ENCODE measurements at regions of chr9 and their contacts with region 1.

Region 1: GRCh38 chr9:35732122-35732799 is at the starts of genes CREB3 and TLN1:
- DNase-seq: peak; percentile 98
- ATAC-seq: peak; percentile 87
- H3K4me3 ChIP-seq: peak within 1 kb of the TSS; percentile 52 to 87 (median 82)
- H3K4me3 Mint-ChIP-seq: no peak within 1 kb of the TSS
- H3K27ac ChIP-seq: peak within 1 kb of the TSS; percentile 69 to 92
- H3K27ac Mint-ChIP-seq: peak within 1 kb of the TSS; percentile 96
- H3K4me1 ChIP-seq: peaks cover 53 to 61% of the 10 kb centered on the region in 2 donors
- H3K4me1 Mint-ChIP-seq: peaks cover 12% of the 10 kb centered on the region
- H3K27me3 ChIP-seq: no peaks in the 10 kb centered on the region
- H3K27me3 Mint-ChIP-seq: no peaks in the 10 kb centered on the region
- CTCF ChIP-seq: no peak
- total RNA-seq, gene CREB3: 18.1 and 20.7 TPM in 2 replicates
- total RNA-seq, gene TLN1: 272 and 280 TPM in 2 replicates

Region 2: GRCh38 chr9:34458013-34458958 is 1274.0 kb before region 1 on chr9 and contains the starts of genes DNAI1 and FAM219A:
- CTCF ChIA-PET with region 1: no interaction called
- POLR2A ChIA-PET with region 1: no interaction called
- intact Hi-C with region 1: loop called (anchors 5 kb)
- DNase-seq: peak; percentile 99
- ATAC-seq: peak; percentile 96
- H3K4me3 ChIP-seq: peak within 1 kb of the TSS; percentile 32 to 76 (median 58)
- H3K4me3 Mint-ChIP-seq: peak within 1 kb of the TSS; percentile 96
- H3K27ac ChIP-seq: no peak within 1 kb of the TSS
- H3K27ac Mint-ChIP-seq: peak within 1 kb of the TSS; percentile 86
- H3K4me1 ChIP-seq: peaks cover 14 to 24% of the 10 kb centered on the region in 2 donors
- H3K4me1 Mint-ChIP-seq: peaks cover 35% of the 10 kb centered on the region
- H3K27me3 ChIP-seq: peaks cover 0 to 9% (median 4%) of the 10 kb centered on the region in 4 experiments
- H3K27me3 Mint-ChIP-seq: peaks cover 14% of the 10 kb centered on the region
- CTCF ChIP-seq: no peak
- total RNA-seq, gene DNAI1: not detected in 2 replicates
- total RNA-seq, gene FAM219A: 16.0 and 17.3 TPM in 2 replicates

Region 3: GRCh38 chr9:35611230-35611797 is 120.9 kb before region 1 on chr9:
- CTCF ChIA-PET with region 1: interaction called, 20 read pairs
- POLR2A ChIA-PET with region 1: interaction called, 11 read pairs
- intact Hi-C with region 1: no loop called
- DNase-seq: peak; percentile 72
- ATAC-seq: peak; percentile 90
- H3K4me3 ChIP-seq: no peak overlapping the region
- H3K4me3 Mint-ChIP-seq: no peak overlapping the region
- H3K27ac ChIP-seq: peak overlapping the region in 1 of 2 donors; percentile 45
- H3K27ac Mint-ChIP-seq: peak overlapping the region; percentile 77
- H3K4me1 ChIP-seq: peaks cover 59 to 85% of the 10 kb centered on the region in 2 donors
- H3K4me1 Mint-ChIP-seq: peaks cover 67% of the 10 kb centered on the region
- H3K27me3 ChIP-seq: no peaks in the 10 kb centered on the region
- H3K27me3 Mint-ChIP-seq: no peaks in the 10 kb centered on the region
- CTCF ChIP-seq: peak; percentile 76

Region 4: GRCh38 chr9:35664531-35665470 is 67.5 kb before region 1 on chr9 and contains the start of gene ARHGEF39:
- CTCF ChIA-PET with region 1: interaction called, 24 read pairs
- POLR2A ChIA-PET with region 1: no interaction called
- intact Hi-C with region 1: no loop called
- DNase-seq: peak; percentile 62
- ATAC-seq: peak; percentile 78
- H3K4me3 ChIP-seq: peak within 1 kb of the TSS; percentile 50 to 78 (median 60)
- H3K4me3 Mint-ChIP-seq: peak within 1 kb of the TSS; percentile 88
- H3K27ac ChIP-seq: peak within 1 kb of the TSS in 1 of 2 donors; percentile 2
- H3K27ac Mint-ChIP-seq: peak within 1 kb of the TSS; percentile 55
- H3K4me1 ChIP-seq: peaks cover 38 to 57% of the 10 kb centered on the region in 2 donors
- H3K4me1 Mint-ChIP-seq: peaks cover 61% of the 10 kb centered on the region
- H3K27me3 ChIP-seq: no peaks in the 10 kb centered on the region
- H3K27me3 Mint-ChIP-seq: no peaks in the 10 kb centered on the region
- CTCF ChIP-seq: no peak
- total RNA-seq, gene ARHGEF39: 0.53 and 0.62 TPM in 2 replicates

Region 5: DNA sequence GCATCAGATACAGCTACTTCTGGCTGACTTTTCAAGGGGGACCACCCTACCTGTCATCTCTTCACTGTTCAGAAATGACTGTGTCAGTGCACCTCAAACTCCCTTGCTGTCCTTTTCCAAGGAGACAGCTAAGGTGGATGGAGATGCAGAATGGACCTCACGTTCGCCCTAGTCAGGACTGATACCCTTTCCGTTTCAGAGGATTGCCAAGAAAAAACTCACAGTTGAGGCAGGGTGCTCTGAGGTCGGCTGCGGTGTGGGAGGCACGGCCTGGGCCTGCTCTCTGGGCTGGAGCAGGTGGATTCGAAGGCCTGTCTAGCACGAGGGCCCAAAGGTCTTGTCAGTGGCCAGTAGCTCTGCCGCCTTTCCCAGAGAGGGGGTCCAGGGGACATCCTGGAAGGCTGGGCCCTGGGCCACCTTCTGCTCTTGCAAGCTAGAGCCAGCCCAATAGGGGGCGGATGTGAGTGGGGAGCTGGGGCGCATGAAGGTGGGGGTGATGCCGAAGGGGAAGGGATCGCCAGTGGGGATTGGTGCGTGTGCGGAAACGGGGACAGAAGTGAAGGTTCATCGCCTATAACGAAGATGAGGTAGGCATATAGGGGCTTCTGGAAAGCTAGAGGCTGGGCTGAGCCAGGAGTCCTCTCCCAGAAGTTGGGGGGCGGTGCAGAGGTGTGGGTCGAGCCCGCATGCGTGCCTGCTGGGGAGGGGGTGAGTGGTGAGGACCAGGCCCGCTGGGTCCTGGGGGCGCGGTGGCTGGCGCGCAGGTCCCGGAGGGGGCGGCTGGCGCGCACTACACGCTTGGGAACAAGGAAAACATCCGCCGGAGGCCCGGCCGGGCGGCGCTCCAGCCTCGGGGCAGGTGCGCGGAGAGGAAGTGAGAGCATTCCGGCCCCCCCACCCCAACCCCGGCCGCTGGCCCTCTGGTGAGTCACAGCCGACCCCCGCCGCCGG is 24.3 kb after region 1 on chr9:
- CTCF ChIA-PET with region 1: interaction called, 20 read pairs
- POLR2A ChIA-PET with region 1: interaction called, 5 read pairs
- intact Hi-C with region 1: loop called (anchors 1 kb)
- DNase-seq: peak; percentile 84
- ATAC-seq: peak; percentile 80
- H3K4me3 ChIP-seq: peak overlapping the region; percentile 39 to 85 (median 81)
- H3K4me3 Mint-ChIP-seq: peak overlapping the region; percentile 93
- H3K27ac ChIP-seq: peak overlapping the region; percentile 92 to 94
- H3K27ac Mint-ChIP-seq: peak overlapping the region; percentile 97
- H3K4me1 ChIP-seq: peaks cover 34 to 44% of the 10 kb centered on the region in 2 donors
- H3K4me1 Mint-ChIP-seq: peaks cover 65% of the 10 kb centered on the region
- H3K27me3 ChIP-seq: no peaks in the 10 kb centered on the region
- H3K27me3 Mint-ChIP-seq: no peaks in the 10 kb centered on the region
- CTCF ChIP-seq: peak; percentile 70

Region 6: DNA sequence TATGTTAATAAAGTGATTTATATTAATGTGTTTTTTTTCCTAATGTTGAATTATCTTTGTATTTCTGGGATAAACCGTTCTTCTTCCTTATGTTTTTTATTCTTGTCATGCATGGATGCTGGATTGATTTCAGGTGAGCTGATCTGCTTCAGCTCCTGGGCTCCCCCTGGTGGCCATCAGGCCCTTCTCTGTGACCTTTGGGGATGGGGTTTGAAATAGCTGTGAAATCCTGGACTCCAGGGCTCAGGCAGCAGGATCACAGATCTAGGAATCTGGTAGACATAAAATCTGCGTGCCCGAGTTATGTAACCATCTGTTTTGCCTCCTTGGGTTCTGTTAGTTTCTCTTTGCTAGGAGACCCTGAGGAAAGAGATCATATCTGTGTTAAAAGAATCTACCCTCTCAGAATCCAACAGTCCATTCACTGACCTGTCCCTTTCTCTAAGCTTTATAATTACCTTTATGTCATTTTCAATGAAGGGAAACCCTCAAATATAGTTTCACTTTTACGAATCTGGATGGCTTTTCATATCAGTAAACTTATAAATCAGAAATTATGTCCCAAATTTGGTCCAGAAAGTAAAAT is 150.1 kb after region 1 on chr9:
- CTCF ChIA-PET with region 1: interaction called, 30 read pairs
- POLR2A ChIA-PET with region 1: interaction called, 3 read pairs
- intact Hi-C with region 1: loop called (anchors 1 kb)
- DNase-seq: peak; percentile 84
- ATAC-seq: peak; percentile 66
- H3K4me3 ChIP-seq: no peak overlapping the region
- H3K4me3 Mint-ChIP-seq: no peak overlapping the region
- H3K27ac ChIP-seq: no peak overlapping the region
- H3K27ac Mint-ChIP-seq: no peak overlapping the region
- H3K4me1 ChIP-seq: no peaks in the 10 kb centered on the region
- H3K4me1 Mint-ChIP-seq: no peaks in the 10 kb centered on the region
- H3K27me3 ChIP-seq: peaks cover 0 to 3% (median 0%) of the 10 kb centered on the region in 4 experiments
- H3K27me3 Mint-ChIP-seq: peaks cover 17% of the 10 kb centered on the region
- CTCF ChIP-seq: peak; percentile 99

Region 7: GRCh38 chr9:35910613-35911359 is 178.5 kb after region 1 on chr9:
- CTCF ChIA-PET with region 1: no interaction called
- POLR2A ChIA-PET with region 1: no interaction called
- intact Hi-C with region 1: no loop called
- DNase-seq: peak; percentile 40
- ATAC-seq: no peak
- H3K4me3 ChIP-seq: no peak overlapping the region
- H3K4me3 Mint-ChIP-seq: no peak overlapping the region
- H3K27ac ChIP-seq: no peak overlapping the region
- H3K27ac Mint-ChIP-seq: no peak overlapping the region
- H3K4me1 ChIP-seq: peaks cover 4 to 7% of the 10 kb centered on the region in 2 donors
- H3K4me1 Mint-ChIP-seq: peaks cover 7% of the 10 kb centered on the region
- H3K27me3 ChIP-seq: peaks cover 0 to 13% (median 3%) of the 10 kb centered on the region in 4 experiments
- H3K27me3 Mint-ChIP-seq: peaks cover 21% of the 10 kb centered on the region
- CTCF ChIP-seq: peak; percentile 20

Measured in B cell (primary cell).